Activated CD4-positive, alpha-beta T cell treated with anti-CD3 and anti-CD28 coated beads, Interleukin-2, amount 10 ng/mL, durations not matched to agents 7 days and 5 days (primary cell): ENCODE measurements at regions of chr1 and their contacts with region 1.

Region 1: GRCh38 chr1:214648801-214649200 is 45.8 kb downstream of the CENPF start:
- DNase-seq: no peak
- H3K4me3 Mint-ChIP-seq: no peak overlapping the region
- H3K27ac Mint-ChIP-seq: peak overlapping the region; percentile 33
- H3K4me1 Mint-ChIP-seq: peaks cover 18% of the 10 kb centered on the region
- H3K27me3 Mint-ChIP-seq: no peaks in the 10 kb centered on the region

Region 2: GRCh38 chr1:214660862-214661261 is 12.1 kb after region 1 on chr1:
- CTCF ChIA-PET with region 1: interaction called, 14 read pairs
- POLR2A ChIA-PET with region 1: no interaction called
- DNase-seq: peak; percentile 12
- H3K4me3 Mint-ChIP-seq: no peak overlapping the region
- H3K27ac Mint-ChIP-seq: no peak overlapping the region
- H3K4me1 Mint-ChIP-seq: no peaks in the 10 kb centered on the region
- H3K27me3 Mint-ChIP-seq: no peaks in the 10 kb centered on the region